Mammary epithelial cell (primary cell): ENCODE measurements at regions of chr16 and their contacts with region 1.

Region 1: GRCh38 chr16:10497132-10498101 is 83.0 kb downstream of the EMP2 start:
- DNase-seq: peak; percentile 80
- H3K4me3 ChIP-seq: no peak overlapping the region
- H3K27ac ChIP-seq: no peak overlapping the region
- H3K4me1 ChIP-seq: peaks cover 5% of the 10 kb centered on the region
- H3K27me3 ChIP-seq: no peaks in the 10 kb centered on the region
- CTCF ChIP-seq: no peak

Region 2: GRCh38 chr16:10355589-10355988 is 141.8 kb before region 1 on chr16:
- CTCF ChIA-PET with region 1: interaction called, 17 read pairs
- dilution Hi-C with region 1: no loop called
- in situ Hi-C with region 1: no loop called
- intact Hi-C with region 1: no loop called
- DNase-seq: no peak
- H3K4me3 ChIP-seq: no peak overlapping the region
- H3K27ac ChIP-seq: no peak overlapping the region
- H3K4me1 ChIP-seq: peaks cover 7% of the 10 kb centered on the region
- H3K27me3 ChIP-seq: no peaks in the 10 kb centered on the region
- CTCF ChIP-seq: no peak

Region 3: DNA sequence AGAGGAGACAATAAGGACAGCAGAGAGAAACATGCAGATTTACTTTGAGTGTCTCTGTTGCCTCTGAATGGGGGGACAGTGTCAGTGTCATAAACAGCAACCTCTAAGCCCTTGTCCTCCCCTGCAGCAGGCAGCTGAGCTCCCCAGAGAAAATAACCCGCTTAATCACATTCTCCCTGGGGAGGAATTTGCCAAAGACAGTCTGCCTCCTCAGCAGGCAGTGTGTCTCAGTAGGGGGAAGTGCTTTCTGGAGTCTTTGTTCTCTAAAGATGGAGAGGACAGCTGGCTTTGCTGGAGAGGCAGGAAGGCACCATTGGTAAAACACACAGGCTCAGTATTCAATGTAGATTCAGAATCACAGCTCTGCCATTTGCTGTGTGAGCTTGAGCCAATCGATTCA is 181.2 kb after region 1 on chr16:
- CTCF ChIA-PET with region 1: no interaction called
- dilution Hi-C with region 1: no loop called
- in situ Hi-C with region 1: no loop called
- intact Hi-C with region 1: no loop called
- DNase-seq: no peak
- H3K4me3 ChIP-seq: no peak overlapping the region
- H3K27ac ChIP-seq: no peak overlapping the region
- H3K4me1 ChIP-seq: no peaks in the 10 kb centered on the region
- H3K27me3 ChIP-seq: no peaks in the 10 kb centered on the region
- CTCF ChIP-seq: no peak